ENCODE measurements at regions of chr15 and their contacts with region 1.

Region 1: DNA sequence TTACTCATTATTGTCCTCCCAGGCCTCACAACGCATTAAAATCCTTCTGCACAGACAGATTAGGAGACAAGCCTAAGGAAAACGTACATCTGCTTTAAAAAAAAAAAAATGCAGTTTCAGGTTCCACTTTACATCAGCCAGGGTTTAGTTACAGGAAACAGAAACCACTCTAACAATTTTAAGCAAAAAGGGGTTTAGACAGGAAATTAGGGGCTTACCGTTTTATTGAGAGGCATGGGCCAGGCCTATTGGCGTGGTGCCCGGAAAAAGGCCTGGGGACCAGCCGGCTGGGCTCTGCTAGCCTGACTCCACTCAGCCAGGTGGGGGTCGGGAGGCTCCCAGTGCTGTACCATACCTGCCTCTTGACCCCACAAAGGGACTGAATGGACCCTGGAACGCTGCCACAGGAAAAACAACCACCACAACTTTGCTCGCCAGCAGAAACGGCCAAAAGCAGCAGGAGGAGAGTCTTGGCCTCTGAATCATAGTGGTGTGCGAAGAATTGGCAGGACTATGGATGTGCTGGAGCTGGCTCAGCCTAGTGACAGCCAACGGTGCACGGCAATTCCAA is 124.3 kb downstream of the CHSY1 start:
- DNase-seq: peak; percentile 73
- H3K4me3 Mint-ChIP-seq: peak overlapping the region; percentile 53
- H3K27ac Mint-ChIP-seq: peak overlapping the region; percentile 94
- H3K4me1 Mint-ChIP-seq: peaks cover 53% of the 10 kb centered on the region
- H3K27me3 Mint-ChIP-seq: peaks cover 4% of the 10 kb centered on the region

Region 2: DNA sequence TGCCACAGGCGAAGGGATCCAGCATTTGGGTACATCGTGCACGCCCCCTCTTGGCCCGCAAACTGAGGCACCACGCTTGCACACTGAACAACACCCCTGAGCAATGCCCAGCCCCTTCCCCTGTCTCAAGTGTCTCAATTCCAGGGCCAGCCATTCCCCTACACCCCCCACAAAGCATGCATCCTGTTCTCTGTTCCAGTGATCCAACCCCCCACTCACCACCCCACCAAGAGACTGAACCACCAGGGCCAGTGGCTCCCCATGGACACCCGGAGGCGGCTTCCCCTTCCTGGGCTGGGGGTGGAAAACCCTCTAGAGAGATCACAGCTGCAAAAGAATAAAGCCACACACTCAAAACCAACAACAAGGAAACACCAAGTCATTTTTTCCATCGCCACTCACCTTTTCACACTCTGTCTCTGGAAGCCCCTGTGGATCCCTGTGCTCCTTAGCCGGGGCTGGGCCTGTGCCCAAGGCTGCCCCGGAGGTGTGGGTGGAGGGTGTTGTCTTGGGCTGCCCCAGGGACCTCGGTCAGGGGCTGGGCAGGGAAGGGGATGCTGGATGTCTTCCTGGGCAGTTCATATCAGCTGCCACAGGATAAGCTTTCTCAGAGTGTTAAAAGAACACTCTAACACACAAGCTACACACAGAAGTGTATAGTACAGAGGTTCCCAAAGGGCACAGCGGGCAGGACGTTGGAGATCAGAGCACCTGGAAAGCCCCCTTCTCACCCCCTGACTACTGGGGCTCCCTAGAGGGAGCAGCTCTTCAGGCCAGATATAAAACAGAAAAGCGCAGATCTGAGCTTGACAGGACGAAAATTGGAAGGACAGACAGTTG is 31.7 kb after region 1 on chr15:
- CTCF ChIA-PET with region 1: no interaction called
- intact Hi-C with region 1: loop called (anchors 1 kb)
- DNase-seq: peak; percentile 63
- H3K4me3 Mint-ChIP-seq: no peak overlapping the region
- H3K27ac Mint-ChIP-seq: peak overlapping the region; percentile 35
- H3K4me1 Mint-ChIP-seq: peaks cover 25% of the 10 kb centered on the region
- H3K27me3 Mint-ChIP-seq: no peaks in the 10 kb centered on the region

Region 3: DNA sequence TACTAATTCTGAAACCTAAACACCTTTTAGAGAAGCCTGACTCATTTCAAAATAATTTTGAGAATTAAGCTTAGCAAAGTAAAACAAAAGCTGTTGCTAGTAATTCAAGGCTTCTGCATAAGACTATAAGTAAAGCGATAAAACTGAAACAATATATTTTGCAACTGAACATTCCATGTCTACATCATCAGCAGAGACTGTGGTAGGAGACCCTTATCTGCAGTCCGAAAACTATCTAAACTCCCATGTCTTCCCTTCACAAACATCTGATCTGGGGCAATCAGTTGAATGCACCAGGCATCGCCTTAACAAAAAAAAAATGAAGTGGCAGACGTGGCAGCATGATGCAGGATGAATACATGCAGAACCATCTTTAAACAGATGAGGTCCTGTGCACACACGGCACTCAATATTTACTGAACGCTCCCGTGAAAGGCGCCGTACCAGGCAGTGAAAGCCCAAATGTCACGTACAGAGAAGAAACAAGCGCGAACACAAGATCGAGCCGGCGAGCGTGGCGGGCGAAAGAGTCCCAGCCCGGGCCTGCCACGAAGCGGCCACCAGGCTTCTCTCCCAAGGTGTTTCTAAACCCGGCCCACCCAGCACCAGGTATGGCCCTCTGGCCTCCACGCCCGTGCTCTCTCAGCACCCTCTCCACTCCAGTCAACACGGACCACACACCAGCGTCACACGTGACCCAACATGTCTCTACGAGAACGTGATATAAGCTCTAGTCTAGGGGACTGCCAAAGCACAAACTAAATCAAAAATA is 61.2 kb after region 1 on chr15:
- CTCF ChIA-PET with region 1: interaction called, 3 read pairs
- intact Hi-C with region 1: loop called (anchors 1 kb)
- DNase-seq: no peak
- H3K4me3 Mint-ChIP-seq: peak overlapping the region; percentile 1
- H3K27ac Mint-ChIP-seq: peak overlapping the region; percentile 73
- H3K4me1 Mint-ChIP-seq: peaks cover 75% of the 10 kb centered on the region
- H3K27me3 Mint-ChIP-seq: no peaks in the 10 kb centered on the region

Region 4: DNA sequence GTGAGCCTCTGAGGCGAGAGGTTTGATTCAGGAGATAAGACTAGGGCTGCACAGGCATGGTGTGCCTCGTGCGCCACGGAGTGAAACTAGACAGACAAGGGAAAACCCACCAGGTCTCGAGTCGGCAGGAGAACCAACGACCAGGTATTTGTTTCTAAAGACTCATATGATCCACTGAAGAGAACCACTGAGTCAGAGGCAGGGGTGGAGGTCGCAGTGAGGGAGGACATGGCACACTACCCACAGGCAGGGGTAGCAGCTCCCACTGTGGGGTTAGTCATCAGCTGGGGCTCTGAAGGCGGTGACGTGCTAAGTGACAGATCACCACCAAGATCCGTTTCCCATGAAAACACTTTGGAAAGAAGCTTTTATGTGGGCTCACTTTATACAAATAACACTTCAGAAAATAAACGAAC is 78.6 kb after region 1 on chr15:
- CTCF ChIA-PET with region 1: no interaction called
- intact Hi-C with region 1: loop called (anchors 1 kb)
- DNase-seq: peak; percentile 89
- H3K4me3 Mint-ChIP-seq: peak overlapping the region; percentile 72
- H3K27ac Mint-ChIP-seq: peak overlapping the region; percentile 92
- H3K4me1 Mint-ChIP-seq: peaks cover 83% of the 10 kb centered on the region
- H3K27me3 Mint-ChIP-seq: no peaks in the 10 kb centered on the region

Region 5: DNA sequence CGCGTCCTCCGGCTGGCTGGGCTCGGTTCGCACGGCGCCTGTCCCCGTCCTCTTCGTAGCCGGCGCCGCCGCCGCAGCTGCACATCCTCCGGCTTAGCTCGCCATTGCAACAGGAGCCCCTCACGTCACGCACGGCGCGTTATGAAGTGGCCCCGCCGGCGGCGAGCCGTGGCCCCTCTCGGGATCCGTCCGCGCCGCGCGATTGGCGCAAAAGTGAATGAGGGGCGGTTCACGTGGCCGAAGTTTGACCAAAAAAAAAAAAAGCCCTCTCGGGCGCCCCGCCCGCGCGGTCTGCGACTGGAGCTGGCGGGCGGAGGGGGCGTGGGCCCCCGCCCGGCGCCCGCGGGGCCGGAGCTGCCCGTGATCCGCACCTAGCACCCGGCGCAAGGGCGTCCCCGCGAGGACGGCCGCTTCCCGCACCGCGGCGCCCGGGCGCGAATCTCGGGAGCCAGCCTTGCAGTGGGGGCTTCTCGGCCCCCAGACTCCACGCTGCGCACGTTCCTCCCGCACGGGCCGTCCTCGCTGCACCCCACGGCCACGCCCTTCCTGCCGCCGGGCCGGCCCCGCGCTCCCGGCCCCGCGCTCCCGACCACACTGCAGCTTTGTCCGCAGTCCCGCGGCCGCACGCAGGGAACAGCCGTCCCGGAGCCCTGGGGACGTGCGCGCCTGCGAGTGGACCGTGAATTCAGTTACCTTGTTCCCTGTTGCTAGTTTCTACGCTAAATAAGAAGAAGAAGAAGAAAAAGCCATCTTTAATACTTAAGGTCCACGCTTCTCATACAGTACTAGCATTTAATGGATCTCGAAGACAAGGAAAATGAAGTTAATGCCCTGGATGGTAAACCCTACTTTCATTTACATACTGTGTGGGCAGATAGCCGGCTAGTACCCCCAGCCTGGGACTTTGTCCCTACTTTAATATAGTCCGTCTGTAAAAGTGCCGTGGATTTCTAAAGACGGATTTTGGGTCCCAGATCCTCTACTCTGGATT is 124.5 kb after region 1 on chr15 and contains the start of gene CHSY1:
- CTCF ChIA-PET with region 1: interaction called, 18 read pairs
- intact Hi-C with region 1: loop called (anchors 1 kb)
- DNase-seq: peak; percentile 79
- H3K4me3 Mint-ChIP-seq: peak within 1 kb of the TSS; percentile 90
- H3K27ac Mint-ChIP-seq: peak within 1 kb of the TSS; percentile 88
- H3K4me1 Mint-ChIP-seq: peaks cover 60% of the 10 kb centered on the region
- H3K27me3 Mint-ChIP-seq: no peaks in the 10 kb centered on the region
- total RNA-seq, gene CHSY1: 19.5 to 21.8 TPM